CD8-positive, alpha-beta T cell (primary cell): ENCODE measurements at regions of chr14 and their contacts with region 1.

Region 1: GRCh38 chr14:75088574-75089373 is 19.3 kb downstream of the ZC2HC1C start:
- DNase-seq: peak in 7 of 9 experiments; percentile 29 to 70 (median 47)
- ATAC-seq: peak; percentile 58
- H3K4me3 ChIP-seq: no peak overlapping the region
- H3K4me3 Mint-ChIP-seq: no peak overlapping the region
- H3K27ac ChIP-seq: no peak overlapping the region
- H3K27ac Mint-ChIP-seq: no peak overlapping the region
- H3K4me1 ChIP-seq: no peaks in the 10 kb centered on the region
- H3K4me1 Mint-ChIP-seq: no peaks in the 10 kb centered on the region
- H3K27me3 ChIP-seq: no peaks in the 10 kb centered on the region
- H3K27me3 Mint-ChIP-seq: no peaks in the 10 kb centered on the region
- CTCF ChIP-seq: peak; percentile 72

Region 2: GRCh38 chr14:74860906-74861733 is 227.7 kb before region 1 on chr14:
- CTCF ChIA-PET with region 1: interaction called, 84 read pairs
- POLR2A ChIA-PET with region 1: no interaction called
- intact Hi-C with region 1: loop called (anchors 1 kb)
- DNase-seq: peak; percentile 85 to 99 (median 90)
- ATAC-seq: peak; percentile 84
- H3K4me3 ChIP-seq: no peak overlapping the region
- H3K4me3 Mint-ChIP-seq: no peak overlapping the region
- H3K27ac ChIP-seq: no peak overlapping the region
- H3K27ac Mint-ChIP-seq: no peak overlapping the region
- H3K4me1 ChIP-seq: peaks cover 4% of the 10 kb centered on the region
- H3K4me1 Mint-ChIP-seq: peaks cover 7% of the 10 kb centered on the region
- H3K27me3 ChIP-seq: no peaks in the 10 kb centered on the region
- H3K27me3 Mint-ChIP-seq: no peaks in the 10 kb centered on the region
- CTCF ChIP-seq: peak; percentile 85

Region 3: GRCh38 chr14:74913986-74914573 is 174.7 kb before region 1 on chr14:
- CTCF ChIA-PET with region 1: interaction called, 6 read pairs
- POLR2A ChIA-PET with region 1: no interaction called
- intact Hi-C with region 1: loop called in 1 of 2 experiments (anchors 1 kb)
- DNase-seq: peak in 1 of 9 experiments; percentile 21
- ATAC-seq: no peak
- H3K4me3 ChIP-seq: no peak overlapping the region
- H3K4me3 Mint-ChIP-seq: no peak overlapping the region
- H3K27ac ChIP-seq: no peak overlapping the region
- H3K27ac Mint-ChIP-seq: no peak overlapping the region
- H3K4me1 ChIP-seq: no peaks in the 10 kb centered on the region
- H3K4me1 Mint-ChIP-seq: no peaks in the 10 kb centered on the region
- H3K27me3 ChIP-seq: no peaks in the 10 kb centered on the region
- H3K27me3 Mint-ChIP-seq: no peaks in the 10 kb centered on the region
- CTCF ChIP-seq: no peak

Region 4: DNA sequence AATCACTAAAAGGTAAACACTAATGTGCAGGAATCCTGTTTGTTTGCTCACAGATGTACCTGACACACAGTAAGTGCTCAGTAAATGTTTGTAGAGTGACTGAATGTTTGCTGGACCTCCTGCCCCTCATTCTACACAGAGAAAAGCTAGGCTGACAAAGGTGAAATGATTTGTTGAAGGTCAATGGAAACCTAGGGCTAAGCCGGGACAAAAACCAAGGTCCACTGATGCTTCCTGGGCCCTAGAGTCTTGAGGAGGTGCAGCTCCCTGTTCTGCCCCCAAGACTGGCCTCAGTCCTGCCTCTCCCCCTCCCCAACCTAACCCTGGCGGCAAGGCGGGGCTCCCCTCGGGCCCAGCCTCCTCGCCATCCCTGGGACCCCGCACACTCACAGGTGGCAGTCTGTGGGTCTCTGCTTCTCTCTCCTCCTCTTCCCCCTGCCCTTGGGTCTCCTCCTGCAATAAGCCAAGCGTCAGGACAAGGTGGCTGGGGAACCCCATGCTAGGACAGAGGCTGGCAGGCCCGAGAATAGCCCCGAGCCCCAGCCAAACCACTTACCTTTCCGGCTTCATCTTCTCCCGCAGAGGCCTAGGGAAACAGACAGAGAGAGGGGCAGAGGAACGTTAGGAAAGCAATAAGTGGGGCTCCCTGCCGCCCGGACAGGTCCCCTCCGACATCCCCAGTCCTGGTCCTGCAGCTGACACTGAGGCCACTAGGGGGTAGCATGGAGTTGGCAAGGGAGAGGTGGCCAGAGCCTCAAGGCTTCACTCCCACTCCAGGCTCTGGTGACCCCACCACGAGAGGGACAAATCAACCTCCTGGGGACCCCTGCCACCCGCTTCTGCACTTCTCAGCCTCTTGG is 142.7 kb before region 1 on chr14:
- CTCF ChIA-PET with region 1: interaction called, 65 read pairs
- POLR2A ChIA-PET with region 1: no interaction called
- intact Hi-C with region 1: loop called in 1 of 2 experiments (anchors 1 kb)
- DNase-seq: peak; percentile 49 to 83 (median 76)
- ATAC-seq: peak; percentile 83
- H3K4me3 ChIP-seq: no peak overlapping the region
- H3K4me3 Mint-ChIP-seq: peak overlapping the region; percentile 18
- H3K27ac ChIP-seq: no peak overlapping the region
- H3K27ac Mint-ChIP-seq: no peak overlapping the region
- H3K4me1 ChIP-seq: peaks cover 30% of the 10 kb centered on the region
- H3K4me1 Mint-ChIP-seq: peaks cover 26% of the 10 kb centered on the region
- H3K27me3 ChIP-seq: no peaks in the 10 kb centered on the region
- H3K27me3 Mint-ChIP-seq: peaks cover 3% of the 10 kb centered on the region
- CTCF ChIP-seq: peak; percentile 84

Region 5: DNA sequence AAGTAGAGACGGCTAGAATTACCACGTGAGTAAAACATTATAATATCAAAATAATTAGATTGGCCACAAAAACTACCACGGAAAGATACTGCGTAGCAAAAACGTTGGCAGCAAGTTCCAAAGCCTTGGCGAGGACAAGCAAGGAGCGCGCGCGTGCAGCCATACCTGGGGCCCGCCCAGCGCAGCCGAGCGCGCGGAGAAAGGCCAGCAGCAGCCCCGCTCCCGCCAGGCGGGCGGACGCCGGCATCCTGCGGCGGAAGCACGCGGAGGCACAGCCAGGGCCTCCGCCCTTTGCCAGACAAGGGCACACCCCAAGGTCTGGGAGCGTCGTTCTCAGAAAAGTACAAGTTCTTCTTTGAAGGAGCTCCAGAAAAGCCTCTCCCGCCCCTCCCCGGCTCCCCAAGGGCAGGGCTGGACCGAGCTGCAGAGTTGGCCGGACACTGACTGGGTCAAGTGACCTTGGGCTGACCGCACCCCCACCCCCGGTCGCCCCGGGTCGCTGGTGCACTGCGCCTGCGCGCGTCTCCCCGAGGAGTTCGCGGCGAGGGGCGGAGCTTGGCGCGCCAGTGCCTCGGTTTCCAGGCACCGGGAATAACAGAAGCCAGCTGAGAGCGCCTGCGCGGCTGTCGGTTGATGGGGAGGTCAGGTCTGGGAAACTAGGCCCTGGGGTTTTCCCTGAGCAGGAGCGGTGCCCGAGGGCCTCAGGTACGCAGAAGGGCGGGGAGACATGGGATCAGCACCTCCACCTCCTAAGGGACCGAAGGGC is 19.5 kb before region 1 on chr14 and contains the start of gene ZC2HC1C:
- CTCF ChIA-PET with region 1: interaction called, 16 read pairs
- POLR2A ChIA-PET with region 1: no interaction called
- intact Hi-C with region 1: no loop called
- DNase-seq: peak in 8 of 9 experiments; percentile 24 to 64 (median 42)
- ATAC-seq: peak; percentile 78
- H3K4me3 ChIP-seq: peak within 1 kb of the TSS; percentile 59 to 68
- H3K4me3 Mint-ChIP-seq: peak within 1 kb of the TSS; percentile 65
- H3K27ac ChIP-seq: no peak within 1 kb of the TSS
- H3K27ac Mint-ChIP-seq: peak within 1 kb of the TSS; percentile 8
- H3K4me1 ChIP-seq: peaks cover 11% of the 10 kb centered on the region
- H3K4me1 Mint-ChIP-seq: peaks cover 4% of the 10 kb centered on the region
- H3K27me3 ChIP-seq: no peaks in the 10 kb centered on the region
- H3K27me3 Mint-ChIP-seq: no peaks in the 10 kb centered on the region
- CTCF ChIP-seq: no peak
- total RNA-seq, gene ZC2HC1C: not detected

Region 6: GRCh38 chr14:75101491-75101890 is 12.7 kb after region 1 on chr14:
- CTCF ChIA-PET with region 1: interaction called, 16 read pairs
- POLR2A ChIA-PET with region 1: no interaction called
- intact Hi-C with region 1: no loop called
- DNase-seq: no peak
- ATAC-seq: no peak
- H3K4me3 ChIP-seq: no peak overlapping the region
- H3K4me3 Mint-ChIP-seq: no peak overlapping the region
- H3K27ac ChIP-seq: no peak overlapping the region
- H3K27ac Mint-ChIP-seq: no peak overlapping the region
- H3K4me1 ChIP-seq: no peaks in the 10 kb centered on the region
- H3K4me1 Mint-ChIP-seq: no peaks in the 10 kb centered on the region
- H3K27me3 ChIP-seq: no peaks in the 10 kb centered on the region
- H3K27me3 Mint-ChIP-seq: no peaks in the 10 kb centered on the region
- CTCF ChIP-seq: no peak

Region 7: DNA sequence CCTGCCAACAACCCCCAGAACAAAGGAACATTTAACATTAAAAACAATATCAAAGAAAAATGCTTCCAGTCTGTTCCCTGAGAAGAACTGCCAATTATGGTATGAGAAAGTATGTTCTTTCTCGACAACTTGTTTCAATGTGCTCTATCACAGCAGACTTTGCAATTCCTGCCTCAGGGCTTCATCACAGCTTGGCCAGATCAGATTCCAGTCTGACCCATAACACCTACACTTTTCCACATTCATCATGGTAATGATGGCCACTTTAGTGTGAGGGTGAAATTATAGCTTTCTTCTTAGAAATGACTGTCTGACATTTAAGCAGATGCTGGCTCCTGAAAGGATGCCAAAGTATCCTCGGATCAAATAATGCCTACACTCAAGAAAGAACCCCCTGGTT is 21.1 kb after region 1 on chr14:
- CTCF ChIA-PET with region 1: interaction called, 16 read pairs
- POLR2A ChIA-PET with region 1: no interaction called
- intact Hi-C with region 1: no loop called
- DNase-seq: no peak
- ATAC-seq: no peak
- H3K4me3 ChIP-seq: no peak overlapping the region
- H3K4me3 Mint-ChIP-seq: no peak overlapping the region
- H3K27ac ChIP-seq: no peak overlapping the region
- H3K27ac Mint-ChIP-seq: no peak overlapping the region
- H3K4me1 ChIP-seq: peaks cover 8% of the 10 kb centered on the region
- H3K4me1 Mint-ChIP-seq: peaks cover 13% of the 10 kb centered on the region
- H3K27me3 ChIP-seq: no peaks in the 10 kb centered on the region
- H3K27me3 Mint-ChIP-seq: no peaks in the 10 kb centered on the region
- CTCF ChIP-seq: no peak